ENCODE measurements at regions of chr3 and their contacts with region 1.

Region 1: DNA sequence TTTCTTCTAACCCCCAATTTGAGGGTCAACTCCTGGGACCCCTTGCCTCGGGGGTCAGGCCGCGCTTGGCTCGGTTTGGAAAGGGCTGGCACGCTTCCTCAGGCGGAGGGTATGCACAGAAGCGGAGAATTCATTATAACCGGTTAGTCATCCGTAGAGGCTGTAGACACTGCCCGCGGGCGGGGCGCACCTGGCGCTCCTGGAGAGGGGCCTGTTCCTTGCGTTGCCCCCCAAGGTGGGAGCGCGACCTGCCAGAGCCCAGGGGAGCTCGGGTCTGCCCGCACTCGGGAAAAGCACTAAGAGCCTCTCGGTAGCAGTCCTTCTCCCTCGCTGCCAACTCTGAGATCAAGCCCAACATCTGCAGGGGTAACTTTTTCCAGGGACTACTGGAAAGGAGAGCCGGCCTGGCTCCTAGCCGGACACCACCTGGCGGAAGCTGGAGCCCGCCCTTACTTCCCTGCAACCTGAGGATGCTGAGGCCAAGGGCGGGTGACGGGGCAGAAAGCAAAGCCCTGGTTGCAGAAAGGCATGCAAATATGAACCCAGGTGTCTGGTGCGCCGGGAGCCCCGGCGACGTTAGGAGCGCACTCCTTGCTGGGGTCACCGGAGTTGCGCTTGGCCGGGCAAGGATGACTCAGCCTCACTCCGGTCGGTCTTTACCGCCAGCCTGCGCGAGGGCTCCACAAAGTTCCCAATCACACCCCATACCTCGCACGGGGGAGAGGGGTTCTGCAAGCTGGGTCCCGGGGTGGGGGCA is 1.5 kb upstream of the CACNA2D3 start:
- DNase-seq: no peak
- H3K4me3 ChIP-seq: peak overlapping the region; percentile 60 to 78
- H3K27ac ChIP-seq: no peak overlapping the region
- H3K4me1 ChIP-seq: peaks cover 14% of the 10 kb centered on the region
- H3K27me3 ChIP-seq: no peaks in the 10 kb centered on the region
- CTCF ChIP-seq: no peak
- POLR2A ChIP-seq: no peak

Region 2: GRCh38 chr3:53680028-53680427 is 440.8 kb before region 1 on chr3:
- intact Hi-C with region 1: loop called (anchors 10 kb)
- DNase-seq: peak in 1 of 2 donors; percentile 42
- H3K4me3 ChIP-seq: no peak overlapping the region
- H3K27ac ChIP-seq: no peak overlapping the region
- H3K4me1 ChIP-seq: no peaks in the 10 kb centered on the region
- H3K27me3 ChIP-seq: no peaks in the 10 kb centered on the region
- CTCF ChIP-seq: no peak
- POLR2A ChIP-seq: no peak

Region 3: GRCh38 chr3:53773611-53774368 is 347.0 kb before region 1 on chr3:
- intact Hi-C with region 1: no loop called
- DNase-seq: no peak
- H3K4me3 ChIP-seq: no peak overlapping the region
- H3K27ac ChIP-seq: peak overlapping the region; percentile 76
- H3K4me1 ChIP-seq: peaks cover 25% of the 10 kb centered on the region
- H3K27me3 ChIP-seq: no peaks in the 10 kb centered on the region
- CTCF ChIP-seq: no peak
- POLR2A ChIP-seq: no peak

Measured in vagina (tissue), 2 donors.